Activated naive CD4-positive, alpha-beta T cell treated with anti-CD3 and anti-CD28 coated beads for 36 hours (primary cell): ENCODE measurements at regions of chr11 and their contacts with region 1.

Region 1: GRCh38 chr11:128522055-128522942 is 65.1 kb downstream of the ETS1 start:
- DNase-seq: peak; percentile 92
- H3K4me3 Mint-ChIP-seq: peak overlapping the region; percentile 96
- H3K27ac Mint-ChIP-seq: peak overlapping the region; percentile 97
- H3K4me1 Mint-ChIP-seq: peaks cover 42% of the 10 kb centered on the region
- H3K27me3 Mint-ChIP-seq: no peaks in the 10 kb centered on the region

Region 2: DNA sequence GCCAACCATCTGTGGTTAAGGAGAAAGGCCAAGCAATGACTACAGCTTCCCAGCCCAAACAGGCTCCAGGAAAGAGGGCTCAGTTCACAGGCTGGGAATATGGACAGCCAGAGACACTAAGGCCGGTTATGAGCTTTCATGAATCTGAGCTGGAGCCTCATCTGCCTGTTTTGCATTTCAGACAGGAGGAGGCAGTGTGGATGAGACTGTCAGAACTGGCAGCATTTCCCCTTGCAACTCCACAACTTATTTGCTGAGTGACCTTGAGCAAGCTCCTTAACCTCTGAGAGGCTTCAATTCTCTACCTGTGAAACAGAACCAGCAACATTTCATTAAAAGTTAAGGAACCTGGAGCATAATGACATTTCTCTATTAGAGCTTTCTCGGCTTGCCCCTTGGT is 198.9 kb before region 1 on chr11:
- CTCF ChIA-PET with region 1: no interaction called
- intact Hi-C with region 1: loop called (anchors 1 kb)
- DNase-seq: peak; percentile 72
- H3K4me3 Mint-ChIP-seq: peak overlapping the region; percentile 32
- H3K27ac Mint-ChIP-seq: peak overlapping the region; percentile 90
- H3K4me1 Mint-ChIP-seq: peaks cover 87% of the 10 kb centered on the region
- H3K27me3 Mint-ChIP-seq: no peaks in the 10 kb centered on the region

Region 3: DNA sequence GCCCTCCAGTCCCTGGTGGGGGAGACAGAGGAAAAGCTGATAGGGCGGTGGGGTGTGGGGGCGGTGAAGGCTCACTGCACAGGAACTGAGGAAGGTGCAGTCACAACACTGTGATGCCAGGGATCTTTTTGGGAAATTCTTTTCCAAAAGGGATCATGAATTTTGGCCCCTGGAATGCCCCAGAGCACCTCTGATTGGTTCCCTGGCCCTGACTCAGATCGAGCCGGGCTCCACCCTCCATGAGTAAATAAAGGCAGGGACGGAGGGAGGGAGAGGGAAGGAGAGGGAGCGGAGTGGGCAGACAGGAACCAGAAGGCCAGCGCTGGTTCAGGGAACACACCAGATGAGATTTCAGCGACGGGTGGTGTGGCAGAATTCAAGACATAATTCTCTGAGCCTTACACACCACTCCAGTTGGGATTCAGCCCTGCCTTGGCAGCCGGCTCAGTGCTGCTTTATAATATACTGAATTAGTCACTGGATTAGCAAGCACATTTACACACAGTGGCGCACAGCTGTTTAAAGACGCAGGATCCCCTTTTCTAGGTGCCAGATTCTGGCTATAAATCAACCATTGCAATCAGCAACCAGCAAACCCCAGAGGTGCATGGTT is 15.2 kb before region 1 on chr11:
- CTCF ChIA-PET with region 1: interaction called, 43 read pairs
- intact Hi-C with region 1: loop called (anchors 2 kb)
- DNase-seq: peak; percentile 82
- H3K4me3 Mint-ChIP-seq: peak overlapping the region; percentile 77
- H3K27ac Mint-ChIP-seq: peak overlapping the region; percentile 97
- H3K4me1 Mint-ChIP-seq: peaks cover 88% of the 10 kb centered on the region
- H3K27me3 Mint-ChIP-seq: no peaks in the 10 kb centered on the region

Region 4: DNA sequence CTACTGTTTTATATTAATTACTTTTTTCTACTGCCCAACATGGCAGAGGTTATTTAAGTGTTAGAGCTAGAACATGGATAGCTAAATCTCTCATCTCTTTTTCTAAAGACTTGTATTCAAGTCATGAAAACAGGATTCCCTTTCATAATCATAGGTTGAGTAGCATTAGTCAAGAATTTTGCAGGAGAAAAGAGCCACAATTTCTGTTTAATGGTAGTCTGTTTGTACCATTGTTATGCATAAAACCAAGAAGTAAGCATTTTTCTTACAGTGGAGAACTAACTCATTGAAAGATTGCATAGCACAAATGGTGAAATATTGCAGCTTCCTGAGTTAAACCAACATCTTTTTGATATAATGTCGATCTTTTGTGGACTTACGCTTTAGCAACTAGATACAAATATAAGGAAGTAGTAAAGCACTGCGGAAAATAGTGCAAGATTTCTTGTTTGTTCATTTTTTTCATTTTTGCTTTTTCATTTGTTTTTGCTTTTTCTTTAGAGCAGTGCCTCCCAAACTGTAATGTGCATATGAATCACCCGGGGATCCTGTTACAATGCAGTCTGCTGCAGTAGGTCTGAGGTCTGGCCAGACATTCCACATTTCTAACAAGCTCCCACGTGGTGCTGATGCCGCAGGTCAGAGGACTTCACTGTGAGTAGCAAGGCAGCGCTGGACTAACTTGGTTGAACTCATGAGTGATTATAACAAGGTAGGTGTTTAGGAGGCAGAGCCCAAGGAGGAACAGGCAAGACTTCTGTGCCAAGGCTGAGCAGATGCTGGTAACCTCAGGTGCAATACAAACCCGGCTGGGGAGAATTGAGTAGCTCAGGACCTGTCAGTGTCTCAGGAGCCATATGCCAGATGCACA is 60.4 kb after region 1 on chr11:
- CTCF ChIA-PET with region 1: interaction called, 6 read pairs
- intact Hi-C with region 1: loop called (anchors 1 kb)
- DNase-seq: peak; percentile 50
- H3K4me3 Mint-ChIP-seq: peak overlapping the region; percentile 69
- H3K27ac Mint-ChIP-seq: peak overlapping the region; percentile 78
- H3K4me1 Mint-ChIP-seq: peaks cover 62% of the 10 kb centered on the region
- H3K27me3 Mint-ChIP-seq: no peaks in the 10 kb centered on the region

Region 5: GRCh38 chr11:128695539-128696221 is 173.4 kb after region 1 on chr11:
- CTCF ChIA-PET with region 1: no interaction called
- intact Hi-C with region 1: loop called (anchors 2 kb)
- DNase-seq: peak; percentile 58
- H3K4me3 Mint-ChIP-seq: peak overlapping the region; percentile 90
- H3K27ac Mint-ChIP-seq: peak overlapping the region; percentile 94
- H3K4me1 Mint-ChIP-seq: peaks cover 54% of the 10 kb centered on the region
- H3K27me3 Mint-ChIP-seq: peaks cover 7% of the 10 kb centered on the region